Activated CD8-positive, alpha-beta T cell treated with anti-CD3 and anti-CD28 coated beads, Interleukin-2, amount 10 ng/mL, durations not matched to agents 7 days and 5 days (primary cell): ENCODE measurements at regions of chr2 and their contacts with region 1.

Region 1: GRCh38 chr2:54570925-54571694 is 115.0 kb downstream of the SPTBN1 start:
- DNase-seq: peak; percentile 88
- ATAC-seq: peak; percentile 41
- H3K4me3 Mint-ChIP-seq: peak overlapping the region; percentile 72
- H3K27ac Mint-ChIP-seq: peak overlapping the region; percentile 84
- H3K4me1 Mint-ChIP-seq: peaks cover 90% of the 10 kb centered on the region
- H3K27me3 Mint-ChIP-seq: no peaks in the 10 kb centered on the region

Region 2: DNA sequence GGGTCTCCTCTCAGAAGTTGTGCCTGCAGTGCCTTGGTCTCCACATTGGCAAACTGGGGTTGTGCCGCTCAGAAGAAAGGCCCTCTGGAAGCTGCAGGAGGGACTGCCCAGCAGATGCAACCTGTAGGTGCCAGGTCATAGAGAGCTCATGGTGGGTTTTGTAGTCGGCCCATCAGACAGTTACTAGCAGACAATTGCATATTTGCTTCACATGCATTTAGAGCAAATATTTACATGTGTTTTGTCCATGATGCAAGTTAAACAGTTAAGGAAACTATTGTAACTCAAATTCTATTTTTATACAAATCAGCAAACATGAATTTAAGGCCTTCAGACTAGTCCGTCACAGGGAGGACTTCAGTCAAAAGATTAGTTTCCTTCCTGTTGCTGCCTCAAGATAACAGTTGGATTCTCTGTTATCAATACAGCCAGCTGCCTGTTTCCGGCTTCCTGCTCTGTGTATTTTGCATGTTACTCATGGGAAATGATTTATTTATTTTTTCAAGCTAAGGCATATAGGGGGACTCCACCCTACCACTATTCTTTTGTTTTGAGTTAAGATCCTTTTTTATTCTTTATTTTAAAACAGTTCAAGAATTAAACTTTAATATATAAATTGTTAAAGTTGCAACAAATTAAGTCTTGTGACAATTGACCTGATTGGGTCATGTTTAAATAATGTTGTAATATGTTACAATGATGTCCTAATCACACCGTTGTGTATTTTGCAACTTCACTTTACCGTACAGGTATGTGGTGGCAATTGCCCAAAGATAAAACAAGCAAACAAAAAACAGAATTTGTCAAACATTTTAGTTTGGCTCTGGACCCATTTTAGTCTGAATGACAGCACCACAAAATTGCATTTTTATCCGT is 18.5 kb after region 1 on chr2:
- CTCF ChIA-PET with region 1: interaction called, 57 read pairs
- POLR2A ChIA-PET with region 1: interaction called, 12 read pairs
- DNase-seq: peak; percentile 59
- ATAC-seq: peak; percentile 71
- H3K4me3 Mint-ChIP-seq: peak overlapping the region; percentile 59
- H3K27ac Mint-ChIP-seq: peak overlapping the region; percentile 89
- H3K4me1 Mint-ChIP-seq: peaks cover 80% of the 10 kb centered on the region
- H3K27me3 Mint-ChIP-seq: no peaks in the 10 kb centered on the region

Region 3: DNA sequence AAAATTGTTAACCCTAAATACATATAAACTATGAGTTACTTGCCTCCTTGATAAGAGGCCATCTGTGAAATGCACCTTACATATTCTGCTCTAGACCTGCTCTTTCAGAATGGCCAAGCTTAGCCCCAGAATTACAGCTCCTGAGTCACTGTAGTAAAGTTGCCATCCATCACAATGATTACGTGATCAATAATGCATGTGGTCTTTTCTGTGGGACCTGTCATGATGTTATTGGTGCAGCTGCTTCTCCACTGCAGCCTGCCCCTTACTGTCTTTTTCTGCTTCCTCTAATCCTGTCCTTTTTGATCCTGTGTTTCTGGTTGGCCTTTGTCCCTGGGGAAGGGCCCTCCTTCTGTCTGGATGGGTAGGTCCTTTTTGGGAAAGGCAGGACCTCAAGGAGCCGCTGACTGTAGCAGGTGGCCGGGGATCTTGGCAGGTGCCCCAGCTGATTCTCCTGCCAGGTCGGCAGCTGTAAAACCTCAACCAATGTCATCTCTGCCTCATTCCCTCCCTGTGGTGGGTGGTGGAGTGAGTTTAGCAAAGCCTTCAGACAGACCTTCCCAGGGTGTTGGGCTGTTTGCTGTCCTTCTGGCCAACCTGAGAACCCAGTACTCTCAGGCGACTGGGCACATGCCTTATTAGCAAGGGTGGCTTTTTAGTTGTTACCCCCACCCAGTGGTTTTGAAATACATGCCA is 26.2 kb after region 1 on chr2:
- CTCF ChIA-PET with region 1: interaction called, 57 read pairs
- POLR2A ChIA-PET with region 1: interaction called, 5 read pairs
- DNase-seq: peak; percentile 48
- ATAC-seq: peak; percentile 45
- H3K4me3 Mint-ChIP-seq: peak overlapping the region; percentile 70
- H3K27ac Mint-ChIP-seq: peak overlapping the region; percentile 96
- H3K4me1 Mint-ChIP-seq: peaks cover 88% of the 10 kb centered on the region
- H3K27me3 Mint-ChIP-seq: no peaks in the 10 kb centered on the region

Region 4: DNA sequence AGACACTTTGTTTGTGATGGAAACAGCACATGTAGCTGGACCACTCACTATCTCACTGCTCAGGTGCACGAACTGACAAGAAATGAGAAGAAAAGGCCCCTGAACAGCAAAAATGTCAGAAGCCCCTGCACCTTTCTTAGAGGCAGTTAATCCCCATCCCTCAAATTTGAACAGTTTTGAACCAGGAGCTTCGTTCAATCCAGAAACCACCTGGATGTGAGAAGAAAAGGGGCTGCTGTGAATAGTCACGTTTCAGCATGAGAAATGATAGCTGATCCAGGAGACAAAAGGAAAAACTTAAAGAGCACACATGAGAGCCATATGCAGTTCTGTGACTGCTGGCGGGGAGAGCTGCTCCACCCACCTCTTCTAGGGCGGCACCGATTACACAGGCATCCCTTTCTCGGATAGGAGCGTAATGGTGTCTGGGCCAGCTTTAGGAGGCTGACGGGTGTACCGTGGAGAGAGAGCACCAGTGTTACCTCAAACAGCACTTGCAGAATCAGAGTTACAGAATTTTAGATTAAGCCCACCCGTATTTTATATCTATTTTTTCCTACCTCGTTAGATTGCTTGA is 35.4 kb after region 1 on chr2:
- CTCF ChIA-PET with region 1: interaction called, 11 read pairs
- POLR2A ChIA-PET with region 1: interaction called, 7 read pairs
- DNase-seq: peak; percentile 42
- ATAC-seq: peak; percentile 57
- H3K4me3 Mint-ChIP-seq: peak overlapping the region; percentile 47
- H3K27ac Mint-ChIP-seq: peak overlapping the region; percentile 72
- H3K4me1 Mint-ChIP-seq: peaks cover 76% of the 10 kb centered on the region
- H3K27me3 Mint-ChIP-seq: no peaks in the 10 kb centered on the region

Region 5: DNA sequence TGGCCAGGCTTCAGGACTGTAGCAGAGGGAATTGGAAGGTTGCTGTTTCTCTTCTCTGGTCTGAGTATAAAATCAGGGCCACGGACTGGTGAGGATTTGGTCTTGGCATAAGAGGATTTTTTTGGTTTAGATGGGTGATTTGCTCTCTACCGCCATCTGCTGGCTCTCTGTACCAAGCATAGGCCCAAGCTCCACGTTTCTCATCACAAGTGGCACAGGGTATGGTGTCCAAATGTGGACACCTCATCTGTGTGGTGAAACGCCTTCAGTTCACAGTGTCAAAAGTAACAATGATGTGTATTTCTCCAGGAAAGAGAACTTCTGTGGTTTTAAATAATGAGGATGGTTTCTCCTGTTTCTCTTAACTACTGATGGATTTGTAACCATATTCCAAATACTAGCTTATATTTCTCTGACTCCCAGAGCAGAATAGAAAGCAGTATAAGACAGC is 267.5 kb after region 1 on chr2:
- CTCF ChIA-PET with region 1: no interaction called
- POLR2A ChIA-PET with region 1: no interaction called
- DNase-seq: peak; percentile 72
- ATAC-seq: peak; percentile 89
- H3K4me3 Mint-ChIP-seq: no peak overlapping the region
- H3K27ac Mint-ChIP-seq: no peak overlapping the region
- H3K4me1 Mint-ChIP-seq: no peaks in the 10 kb centered on the region
- H3K27me3 Mint-ChIP-seq: no peaks in the 10 kb centered on the region